Activated CD8-positive, alpha-beta T cell treated with anti-CD3 and anti-CD28 coated beads for 36 hours (primary cell): ENCODE measurements at regions of chr5 and their contacts with region 1.

Region 1: GRCh38 chr5:160377651-160378050 is 7.2 kb upstream of the C1QTNF2 start:
- DNase-seq: no peak
- ATAC-seq: no peak
- H3K4me3 Mint-ChIP-seq: no peak overlapping the region
- H3K27ac Mint-ChIP-seq: no peak overlapping the region
- H3K4me1 Mint-ChIP-seq: no peaks in the 10 kb centered on the region
- H3K27me3 Mint-ChIP-seq: peaks cover 28% of the 10 kb centered on the region
- CTCF ChIP-seq: no peak

Region 2: GRCh38 chr5:160390787-160391696 is 13.4 kb after region 1 on chr5:
- CTCF ChIA-PET with region 1: interaction called, 13 read pairs
- POLR2A ChIA-PET with region 1: no interaction called
- intact Hi-C with region 1: no loop called
- DNase-seq: no peak
- ATAC-seq: no peak
- H3K4me3 Mint-ChIP-seq: no peak overlapping the region
- H3K27ac Mint-ChIP-seq: no peak overlapping the region
- H3K4me1 Mint-ChIP-seq: no peaks in the 10 kb centered on the region
- H3K27me3 Mint-ChIP-seq: no peaks in the 10 kb centered on the region
- CTCF ChIP-seq: peak; percentile 56